ENCODE measurements at regions of chr9 and their contacts with region 1.

Region 1: DNA sequence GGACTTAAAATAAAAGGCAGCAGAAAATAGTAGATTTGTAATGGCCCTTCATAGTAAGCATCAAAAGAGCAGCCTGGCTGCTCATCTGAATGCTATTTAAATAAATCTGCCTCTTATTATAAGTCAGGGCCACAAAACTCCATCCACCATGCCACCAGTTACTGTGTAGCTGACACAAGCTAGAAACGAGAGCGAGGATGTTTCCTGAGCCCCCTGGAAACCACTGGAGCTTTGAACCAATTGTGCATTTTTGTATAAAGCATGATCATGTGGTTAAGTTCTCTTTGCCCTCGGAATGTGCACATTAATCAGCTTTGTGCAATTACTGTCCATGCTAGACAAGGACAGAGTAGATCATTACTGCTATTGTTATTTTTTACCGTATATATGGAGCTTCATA is 17.4 kb downstream of the SLC24A2 start:
- DNase-seq: no peak
- ATAC-seq: no peak
- H3K4me3 ChIP-seq: no peak overlapping the region
- H3K27ac ChIP-seq: no peak overlapping the region
- H3K4me1 ChIP-seq: no peaks in the 10 kb centered on the region
- H3K27me3 ChIP-seq: peaks cover 0 to 6% (median 0%) of the 10 kb centered on the region in 9 donors
- CTCF ChIP-seq: no peak
- POLR2A ChIP-seq: no peak

Region 2: DNA sequence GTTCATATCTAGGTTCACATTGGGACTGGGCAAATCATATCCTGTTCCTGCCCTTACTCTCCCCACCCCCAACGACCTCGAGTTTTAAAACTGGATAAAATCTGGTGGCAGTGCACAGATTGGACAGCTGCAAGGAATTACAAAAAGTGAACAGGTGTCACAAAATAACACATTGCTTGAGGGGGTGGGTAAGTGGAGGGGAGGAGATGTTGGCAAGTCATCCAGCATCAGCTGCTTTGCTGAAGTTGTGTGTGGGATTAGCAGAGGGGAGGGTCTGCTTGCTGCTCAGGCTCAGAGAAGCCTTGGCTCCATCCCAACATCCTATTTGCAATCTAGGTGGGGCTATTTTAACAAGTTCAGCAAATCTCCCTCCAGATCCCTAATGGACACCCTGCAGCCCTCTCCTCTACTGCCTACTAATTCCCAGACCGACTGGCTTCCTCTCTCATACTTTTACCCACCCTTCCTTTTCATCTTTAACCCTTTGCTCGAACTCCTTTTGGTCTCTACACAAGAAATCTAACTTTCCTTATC is 57.2 kb after region 1 on chr9:
- intact Hi-C with region 1: loop called in 1 of 10 experiments (anchors 5 kb)
- DNase-seq: no peak
- ATAC-seq: no peak
- H3K4me3 ChIP-seq: no peak overlapping the region
- H3K27ac ChIP-seq: no peak overlapping the region
- H3K4me1 ChIP-seq: no peaks in the 10 kb centered on the region
- H3K27me3 ChIP-seq: no peaks in the 10 kb centered on the region
- CTCF ChIP-seq: no peak
- POLR2A ChIP-seq: no peak